ENCODE measurements at regions of chr7 and their contacts with region 1.

Region 1: DNA sequence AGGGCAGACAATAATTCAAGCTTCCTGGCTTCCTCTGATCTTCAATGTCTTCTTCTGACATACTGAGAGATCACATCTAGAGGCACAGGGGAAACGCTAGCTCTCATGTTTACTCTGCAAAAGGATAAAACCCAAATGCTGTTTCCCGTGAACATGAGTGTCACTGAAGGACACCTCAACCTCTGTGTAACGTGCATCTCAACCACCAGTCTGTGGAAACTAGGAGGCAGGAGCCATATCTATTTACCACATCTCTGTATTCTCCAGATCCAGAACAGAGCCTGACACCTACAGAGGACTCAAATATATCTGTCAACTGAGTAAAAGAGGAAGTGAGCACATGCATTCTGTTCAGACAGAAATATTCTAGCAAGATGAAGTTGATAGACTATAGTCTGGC is 140.3 kb upstream of the TARP start:
- DNase-seq: no peak
- ATAC-seq: peak; percentile 45
- H3K4me3 Mint-ChIP-seq: peak overlapping the region; percentile 50
- H3K27ac Mint-ChIP-seq: peak overlapping the region; percentile 74
- H3K4me1 Mint-ChIP-seq: peaks cover 38% of the 10 kb centered on the region
- H3K27me3 Mint-ChIP-seq: peaks cover 2% of the 10 kb centered on the region
- CTCF ChIP-seq: no peak

Region 2: GRCh38 chr7:38427279-38427955 is 13.6 kb after region 1 on chr7:
- CTCF ChIA-PET with region 1: no interaction called
- POLR2A ChIA-PET with region 1: no interaction called
- intact Hi-C with region 1: loop called (anchors 2 kb)
- DNase-seq: no peak
- ATAC-seq: no peak
- H3K4me3 Mint-ChIP-seq: peak overlapping the region; percentile 25
- H3K27ac Mint-ChIP-seq: no peak overlapping the region
- H3K4me1 Mint-ChIP-seq: peaks cover 64% of the 10 kb centered on the region
- H3K27me3 Mint-ChIP-seq: peaks cover 1% of the 10 kb centered on the region
- CTCF ChIP-seq: no peak

Region 3: GRCh38 chr7:38796626-38797501 is 383.1 kb after region 1 on chr7:
- CTCF ChIA-PET with region 1: no interaction called
- POLR2A ChIA-PET with region 1: no interaction called
- intact Hi-C with region 1: no loop called
- DNase-seq: no peak
- ATAC-seq: no peak
- H3K4me3 Mint-ChIP-seq: no peak overlapping the region
- H3K27ac Mint-ChIP-seq: no peak overlapping the region
- H3K4me1 Mint-ChIP-seq: no peaks in the 10 kb centered on the region
- H3K27me3 Mint-ChIP-seq: no peaks in the 10 kb centered on the region
- CTCF ChIP-seq: no peak

Measured in activated B cell treated with CpG ODN at 0.5 μM for 24 hours (primary cell).